Mucosa of descending colon (tissue), 3 donors: ENCODE measurements at regions of chr1 and their contacts with region 1.

Region 1: DNA sequence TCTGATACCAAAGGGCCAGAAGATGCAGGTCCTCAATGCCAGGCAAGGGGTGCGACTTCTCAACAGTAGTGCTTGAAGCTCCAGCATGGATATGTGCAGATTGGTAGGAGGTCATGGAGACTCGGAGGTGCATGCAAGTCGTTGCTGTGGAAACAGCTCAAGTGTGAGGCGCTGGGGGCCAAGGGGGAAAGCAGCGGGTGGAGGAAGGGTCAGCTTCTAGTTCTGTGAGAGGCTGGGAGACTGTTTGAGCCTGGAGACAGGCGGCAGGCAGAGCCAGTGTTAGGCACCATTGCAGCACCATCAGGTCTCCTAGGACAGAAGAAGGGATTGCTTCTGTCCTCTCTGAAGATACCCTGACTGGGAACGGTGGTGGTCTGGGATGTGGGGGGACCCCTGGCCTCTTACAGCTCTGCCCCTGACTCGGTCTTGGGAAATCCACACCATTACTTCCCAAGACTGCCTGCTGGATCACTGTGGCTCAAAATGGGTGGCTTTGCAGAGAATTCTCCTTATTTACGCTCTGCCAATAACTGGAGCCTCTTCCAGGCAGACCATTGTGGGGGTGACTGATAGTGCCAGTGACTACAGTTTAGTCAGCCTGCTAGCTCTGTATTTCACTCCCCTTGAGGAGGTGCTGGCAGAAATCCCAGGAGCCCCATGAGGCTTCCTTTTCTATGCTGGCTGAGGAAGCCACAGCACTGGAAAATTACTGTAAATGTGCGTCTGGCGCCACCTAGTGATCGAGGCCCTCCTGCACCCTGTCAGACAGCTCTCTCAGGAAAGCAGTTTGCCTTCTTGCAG is 46.3 kb upstream of the VANGL1 start:
- DNase-seq: peak; percentile 70 to 92 (median 86)
- ATAC-seq: peak; percentile 86
- H3K4me3 ChIP-seq: no peak overlapping the region
- H3K4me1 ChIP-seq: no peaks in the 10 kb centered on the region
- CTCF ChIP-seq: peak; percentile 85

Region 2: GRCh38 chr1:114979278-114979891 is 616.1 kb before region 1 on chr1:
- intact Hi-C with region 1: loop called in 1 of 2 experiments (anchors 5 kb)
- DNase-seq: peak in 2 of 3 donors; percentile 28 to 89
- ATAC-seq: peak; percentile 54
- H3K4me3 ChIP-seq: no peak overlapping the region
- H3K4me1 ChIP-seq: no peaks in the 10 kb centered on the region
- CTCF ChIP-seq: peak; percentile 49

Region 3: GRCh38 chr1:115138968-115139367 is 456.5 kb before region 1 on chr1:
- intact Hi-C with region 1: loop called (anchors 5 kb)
- DNase-seq: peak; percentile 81 to 89 (median 84)
- ATAC-seq: peak; percentile 98
- H3K4me3 ChIP-seq: no peak overlapping the region
- H3K4me1 ChIP-seq: no peaks in the 10 kb centered on the region
- CTCF ChIP-seq: peak; percentile 85

Region 4: GRCh38 chr1:115679141-115679611 is 83.7 kb after region 1 on chr1:
- intact Hi-C with region 1: no loop called
- DNase-seq: peak in 1 of 3 donors; percentile 33
- ATAC-seq: peak; percentile 47
- H3K4me3 ChIP-seq: no peak overlapping the region
- H3K4me1 ChIP-seq: peaks cover 6% of the 10 kb centered on the region
- CTCF ChIP-seq: no peak

Region 5: GRCh38 chr1:115911324-115911723 is 315.8 kb after region 1 on chr1:
- intact Hi-C with region 1: no loop called
- DNase-seq: peak in 2 of 3 donors; percentile 14 to 22
- ATAC-seq: peak; percentile 43
- H3K4me3 ChIP-seq: no peak overlapping the region
- H3K4me1 ChIP-seq: no peaks in the 10 kb centered on the region
- CTCF ChIP-seq: no peak

Region 6: DNA sequence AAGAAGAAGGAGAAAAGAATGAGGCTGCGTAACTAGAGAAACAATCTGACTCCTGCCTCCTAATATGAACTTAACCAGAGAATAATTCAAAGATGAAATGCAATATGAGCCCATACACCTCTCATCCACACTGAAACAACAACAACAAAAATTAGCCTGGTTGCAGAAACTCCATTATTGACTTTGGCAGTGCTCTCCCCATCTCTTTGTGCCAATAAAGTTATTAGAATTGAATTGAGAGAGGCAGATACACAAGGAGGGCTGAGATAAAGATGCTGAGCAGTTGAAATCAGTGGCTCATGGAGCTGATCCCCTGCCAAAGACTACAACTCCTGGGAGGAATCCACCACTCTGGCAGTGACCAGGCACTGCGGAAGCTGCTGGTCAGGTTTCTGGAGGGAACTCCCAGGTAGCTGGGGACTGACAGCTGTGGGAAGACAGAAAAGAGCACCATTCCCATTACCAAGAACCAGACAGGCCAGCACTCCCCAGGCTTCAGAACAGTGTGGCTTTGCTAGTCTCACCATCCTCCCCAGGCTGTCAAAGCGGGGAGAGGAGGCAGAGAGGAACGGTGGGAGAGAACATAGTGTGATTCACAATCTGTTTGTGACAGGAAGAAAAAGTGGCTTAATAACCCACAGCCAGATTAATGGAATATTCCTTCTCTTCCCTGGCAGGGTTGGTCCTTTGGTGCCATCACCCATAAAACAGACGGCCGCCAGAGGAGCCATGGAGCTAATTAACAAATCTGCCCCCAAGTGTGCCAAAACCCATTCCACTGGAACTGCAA is 607.6 kb after region 1 on chr1:
- intact Hi-C with region 1: no loop called
- DNase-seq: no peak
- ATAC-seq: peak; percentile 9
- H3K4me3 ChIP-seq: no peak overlapping the region
- H3K4me1 ChIP-seq: peaks cover 3% of the 10 kb centered on the region
- CTCF ChIP-seq: no peak